HEK293T (cell line): ENCODE measurements at regions of chr6 and their contacts with region 1.

Region 1: GRCh38 chr6:16168858-16169257 is 40.0 kb downstream of the MYLIP start:
- DNase-seq: no peak

Region 2: GRCh38 chr6:16146527-16146955 is 22.3 kb before region 1 on chr6:
- CTCF ChIA-PET with region 1: interaction called, 13 read pairs
- POLR2A ChIA-PET with region 1: no interaction called
- DNase-seq: peak; percentile 57

Region 3: DNA sequence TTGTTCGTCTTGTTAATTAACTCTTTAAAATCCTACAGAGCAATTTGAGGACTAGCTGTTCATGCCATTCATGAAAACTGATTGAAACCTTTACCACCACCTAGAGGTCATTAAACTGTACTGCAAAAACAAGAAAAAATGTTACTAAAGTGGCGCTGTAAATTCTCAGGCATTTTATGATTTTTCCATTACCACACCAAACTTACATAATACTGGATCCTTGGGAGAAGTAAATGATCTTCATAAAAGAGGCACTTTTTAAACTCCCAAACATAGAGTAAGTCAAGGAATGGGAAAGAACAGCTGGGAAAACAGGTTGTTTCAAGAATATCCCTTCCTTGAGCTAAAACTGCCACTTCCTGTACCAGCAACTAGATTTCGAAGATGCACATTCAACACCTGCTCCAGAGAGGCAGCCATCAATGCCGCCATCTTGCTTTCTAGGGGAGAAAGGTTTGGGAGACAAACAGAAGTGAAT is 14.4 kb after region 1 on chr6:
- CTCF ChIA-PET with region 1: interaction called, 10 read pairs
- POLR2A ChIA-PET with region 1: no interaction called
- DNase-seq: peak; percentile 44

Region 4: GRCh38 chr6:16200321-16200883 is 31.5 kb after region 1 on chr6:
- CTCF ChIA-PET with region 1: no interaction called
- POLR2A ChIA-PET with region 1: no interaction called
- DNase-seq: no peak